H1 (cell line): ENCODE measurements at regions of chr17 and their contacts with region 1.

Region 1: GRCh38 chr17:78341559-78342448 is 18.1 kb downstream of the SOCS3 start:
- DNase-seq: peak in 1 of 2 experiments; percentile 80
- H3K4me3 ChIP-seq: peak overlapping the region; percentile 29 to 61 (median 32); a peak in 6 of 8 replicates
- H3K27ac ChIP-seq: no peak overlapping the region
- H3K4me1 ChIP-seq: peaks cover 0 to 17% (median 14%) of the 10 kb centered on the region in 4 experiments; a peak in 5 of 7 replicates
- H3K27me3 ChIP-seq: peaks cover 0 to 23% (median 13%) of the 10 kb centered on the region in 4 experiments; a peak in 5 of 7 replicates
- CTCF ChIP-seq: no peak
- EP300 ChIP-seq: no peak
- POLR2A ChIP-seq: no peak
- RAD21 ChIP-seq: no peak

Region 2: DNA sequence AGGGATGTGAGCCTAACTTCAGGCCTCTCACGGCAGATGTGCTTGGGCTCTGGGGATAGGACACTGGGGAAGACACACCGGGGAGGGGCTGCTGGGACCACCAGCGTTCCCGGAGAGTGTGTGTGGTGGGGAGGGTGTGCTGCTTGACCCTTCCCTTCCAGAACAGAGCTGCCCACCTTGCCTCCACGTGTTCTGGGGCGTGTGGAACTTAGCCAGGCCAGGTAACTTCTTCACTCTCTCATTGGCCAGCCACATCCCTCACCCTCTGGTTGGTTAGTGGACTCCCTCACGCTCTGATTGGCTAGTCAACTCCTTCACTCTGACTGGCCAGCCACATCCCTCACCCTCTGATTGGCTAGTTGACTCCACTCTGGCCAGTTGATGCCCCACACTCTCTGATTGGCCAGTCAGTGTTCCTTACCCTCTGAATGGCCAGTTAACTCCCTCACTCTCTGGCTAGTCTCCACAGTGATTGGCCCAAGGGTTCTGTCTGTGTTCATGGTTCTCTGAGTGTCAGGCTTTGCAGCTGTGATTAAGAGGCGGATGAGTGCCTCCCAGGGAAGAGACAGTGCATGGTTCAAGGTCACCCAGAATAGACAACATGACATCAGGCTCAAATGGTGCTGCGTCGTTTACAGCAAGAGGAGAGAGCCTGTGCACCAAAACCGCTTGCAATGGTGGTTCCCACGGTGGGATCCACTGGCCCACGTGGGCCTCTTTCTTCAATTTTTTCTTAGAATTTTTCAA is 100.4 kb before region 1 on chr17:
- CTCF ChIA-PET with region 1: no interaction called
- POLR2A ChIA-PET with region 1: no interaction called
- DNase-seq: peak in 1 of 2 experiments; percentile 49
- H3K4me3 ChIP-seq: no peak overlapping the region
- H3K27ac ChIP-seq: no peak overlapping the region
- H3K4me1 ChIP-seq: peaks cover 0 to 3% (median 0%) of the 10 kb centered on the region in 4 experiments; a peak in 2 of 7 replicates
- H3K27me3 ChIP-seq: no peaks in the 10 kb centered on the region
- CTCF ChIP-seq: no peak
- EP300 ChIP-seq: no peak
- POLR2A ChIP-seq: no peak
- RAD21 ChIP-seq: no peak

Region 3: GRCh38 chr17:78324391-78325075 is 17.3 kb before region 1 on chr17:
- CTCF ChIA-PET with region 1: interaction called, 24 read pairs
- POLR2A ChIA-PET with region 1: interaction called, 8 read pairs
- DNase-seq: peak in 1 of 2 experiments; percentile 65
- H3K4me3 ChIP-seq: no peak overlapping the region
- H3K27ac ChIP-seq: no peak overlapping the region
- H3K4me1 ChIP-seq: peaks cover 0 to 26% (median 19%) of the 10 kb centered on the region in 4 experiments; a peak in 6 of 7 replicates
- H3K27me3 ChIP-seq: peaks cover 0 to 2% (median 0%) of the 10 kb centered on the region in 4 experiments; a peak in 1 of 7 replicates
- CTCF ChIP-seq: no peak
- EP300 ChIP-seq: no peak
- POLR2A ChIP-seq: no peak
- RAD21 ChIP-seq: no peak